ENCODE measurements at regions of chr9 and their contacts with region 1.

Region 1: DNA sequence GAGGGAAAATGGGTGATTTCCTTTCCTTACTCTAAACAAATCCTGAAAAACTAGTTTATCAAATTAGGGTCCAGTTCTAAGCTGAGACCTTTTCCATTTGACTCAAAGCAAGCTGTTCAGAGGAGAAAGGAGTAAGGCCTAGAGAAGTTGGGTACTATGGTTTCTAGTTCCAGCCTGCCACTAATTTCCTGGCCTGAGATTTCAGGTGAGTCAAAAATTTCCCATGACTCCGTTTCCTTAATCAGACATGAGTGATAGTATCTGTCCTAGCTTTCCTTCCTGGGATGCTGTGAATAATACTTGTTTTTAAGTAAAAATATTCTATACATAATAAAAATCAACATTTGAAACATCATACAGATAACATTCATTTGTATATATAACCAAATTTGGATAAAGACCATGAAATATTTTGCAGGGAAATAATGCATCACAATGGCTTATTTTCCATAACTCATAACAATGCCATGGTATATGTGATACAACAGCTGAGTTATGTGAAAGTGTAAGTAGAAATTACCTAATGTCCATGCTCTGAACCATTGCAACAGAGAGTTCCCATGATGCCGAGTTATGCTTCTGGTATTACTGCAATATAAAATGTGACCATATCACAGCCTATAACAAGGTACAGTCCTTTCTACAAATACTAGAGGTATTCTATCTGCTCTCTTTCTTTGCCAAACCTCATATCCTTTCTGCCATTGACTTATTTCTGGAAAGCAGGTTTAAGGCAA is 142.7 kb downstream of the MLLT3 start:
- DNase-seq: no peak
- H3K4me3 Mint-ChIP-seq: no peak overlapping the region
- H3K27ac Mint-ChIP-seq: no peak overlapping the region
- H3K4me1 Mint-ChIP-seq: peaks cover 22% of the 10 kb centered on the region
- H3K27me3 Mint-ChIP-seq: no peaks in the 10 kb centered on the region

Region 2: GRCh38 chr9:20419533-20419932 is 60.1 kb before region 1 on chr9:
- intact Hi-C with region 1: loop called (anchors 10 kb)
- DNase-seq: no peak
- H3K4me3 Mint-ChIP-seq: no peak overlapping the region
- H3K27ac Mint-ChIP-seq: no peak overlapping the region
- H3K4me1 Mint-ChIP-seq: peaks cover 17% of the 10 kb centered on the region
- H3K27me3 Mint-ChIP-seq: no peaks in the 10 kb centered on the region

Measured in activated CD4-positive, alpha-beta T cell treated with anti-CD3 and anti-CD28 coated beads, Interleukin-2, amount 10 ng/mL, durations not matched to agents 24 days and 14 days (primary cell).